Thyroid gland (tissue), 4 donors: ENCODE measurements at regions of chr11 and their contacts with region 1.

Region 1: GRCh38 chr11:12673924-12674570 is at the start of gene TEAD1:
- DNase-seq: peak; percentile 96 to 97
- H3K4me3 ChIP-seq: peak within 1 kb of the TSS; percentile 77 to 93 (median 80)
- H3K27ac ChIP-seq: peak within 1 kb of the TSS; percentile 95 to 99 (median 96)
- H3K4me1 ChIP-seq: peaks cover 23 to 26% of the 10 kb centered on the region in 2 donors
- H3K27me3 ChIP-seq: no peaks in the 10 kb centered on the region
- CTCF ChIP-seq: peak in 1 of 6 experiments; percentile 39
- POLR2A ChIP-seq: peak; percentile 74 to 97
- total RNA-seq, gene TEAD1: 71.5 to 109 (median 88.5) TPM

Region 2: GRCh38 chr11:12372111-12372510 is 301.9 kb before region 1 on chr11:
- intact Hi-C with region 1: no loop called
- DNase-seq: no peak
- H3K4me3 ChIP-seq: no peak overlapping the region
- H3K27ac ChIP-seq: no peak overlapping the region
- H3K4me1 ChIP-seq: peaks cover 2 to 5% of the 10 kb centered on the region in 2 donors
- H3K27me3 ChIP-seq: no peaks in the 10 kb centered on the region
- CTCF ChIP-seq: no peak
- POLR2A ChIP-seq: no peak

Region 3: GRCh38 chr11:12565406-12565805 is 108.6 kb before region 1 on chr11:
- intact Hi-C with region 1: no loop called
- DNase-seq: no peak
- H3K4me3 ChIP-seq: no peak overlapping the region
- H3K27ac ChIP-seq: no peak overlapping the region
- H3K4me1 ChIP-seq: no peaks in the 10 kb centered on the region
- H3K27me3 ChIP-seq: no peaks in the 10 kb centered on the region
- CTCF ChIP-seq: no peak
- POLR2A ChIP-seq: no peak

Region 4: DNA sequence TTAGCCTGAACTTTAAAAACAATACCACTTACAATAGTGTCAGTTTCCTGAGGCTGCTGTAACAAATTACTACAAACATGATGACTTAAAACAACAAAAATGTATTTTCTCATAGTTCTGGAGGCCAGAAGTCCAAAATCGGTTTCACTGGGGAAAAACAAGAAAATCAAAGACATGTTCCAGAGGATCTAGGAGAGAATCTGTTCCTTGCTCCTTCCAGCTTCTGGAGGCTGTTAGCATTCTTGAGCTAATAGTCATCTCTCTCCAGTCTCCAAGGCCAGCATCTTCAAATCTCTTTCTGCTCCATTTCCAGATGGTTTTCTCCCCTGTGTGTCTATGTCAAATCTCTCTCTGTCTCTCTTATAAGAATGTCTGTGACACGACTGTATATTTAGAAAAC is 67.5 kb before region 1 on chr11:
- intact Hi-C with region 1: no loop called
- DNase-seq: no peak
- H3K4me3 ChIP-seq: no peak overlapping the region
- H3K27ac ChIP-seq: no peak overlapping the region
- H3K4me1 ChIP-seq: peaks cover 10 to 21% of the 10 kb centered on the region in 2 donors
- H3K27me3 ChIP-seq: no peaks in the 10 kb centered on the region
- CTCF ChIP-seq: no peak
- POLR2A ChIP-seq: no peak

Region 5: GRCh38 chr11:12792590-12792989 is 118.5 kb after region 1 on chr11:
- intact Hi-C with region 1: loop called (anchors 10 kb)
- DNase-seq: no peak
- H3K4me3 ChIP-seq: no peak overlapping the region
- H3K27ac ChIP-seq: no peak overlapping the region
- H3K4me1 ChIP-seq: no peaks in the 10 kb centered on the region
- H3K27me3 ChIP-seq: no peaks in the 10 kb centered on the region
- CTCF ChIP-seq: no peak
- POLR2A ChIP-seq: no peak